GM10248 (cell line): ENCODE measurements at regions of chr9 and their contacts with region 1.

Region 1: GRCh38 chr9:34332076-34332964 is 3.0 kb downstream of the NUDT2 start:
- DNase-seq: no peak
- CTCF ChIP-seq: peak; percentile 47

Region 2: DNA sequence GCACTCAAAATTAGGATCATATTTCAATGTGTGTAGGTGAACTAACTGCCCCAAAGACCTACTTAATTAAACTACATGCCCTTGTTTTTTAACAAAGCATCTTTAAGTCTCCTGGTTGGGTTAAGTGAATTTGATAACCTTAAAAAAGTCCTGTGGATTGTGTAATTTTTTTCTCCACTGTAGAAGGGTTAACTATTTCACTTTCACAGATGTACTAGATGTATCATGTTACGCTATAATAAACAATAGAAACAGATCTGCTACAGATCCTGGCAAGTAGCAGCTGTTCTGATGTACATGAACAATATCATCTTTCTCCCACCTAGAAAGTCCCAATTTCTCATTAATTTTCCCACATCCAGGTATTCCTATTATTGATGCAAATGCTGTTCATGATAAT is 22.1 kb before region 1 on chr9:
- CTCF ChIA-PET with region 1: no interaction called
- POLR2A ChIA-PET with region 1: no interaction called
- DNase-seq: no peak
- CTCF ChIP-seq: no peak

Region 3: GRCh38 chr9:34346873-34347799 is 14.8 kb after region 1 on chr9:
- CTCF ChIA-PET with region 1: interaction called, 11 read pairs
- POLR2A ChIA-PET with region 1: interaction called, 4 read pairs
- DNase-seq: no peak
- CTCF ChIP-seq: no peak

Region 4: DNA sequence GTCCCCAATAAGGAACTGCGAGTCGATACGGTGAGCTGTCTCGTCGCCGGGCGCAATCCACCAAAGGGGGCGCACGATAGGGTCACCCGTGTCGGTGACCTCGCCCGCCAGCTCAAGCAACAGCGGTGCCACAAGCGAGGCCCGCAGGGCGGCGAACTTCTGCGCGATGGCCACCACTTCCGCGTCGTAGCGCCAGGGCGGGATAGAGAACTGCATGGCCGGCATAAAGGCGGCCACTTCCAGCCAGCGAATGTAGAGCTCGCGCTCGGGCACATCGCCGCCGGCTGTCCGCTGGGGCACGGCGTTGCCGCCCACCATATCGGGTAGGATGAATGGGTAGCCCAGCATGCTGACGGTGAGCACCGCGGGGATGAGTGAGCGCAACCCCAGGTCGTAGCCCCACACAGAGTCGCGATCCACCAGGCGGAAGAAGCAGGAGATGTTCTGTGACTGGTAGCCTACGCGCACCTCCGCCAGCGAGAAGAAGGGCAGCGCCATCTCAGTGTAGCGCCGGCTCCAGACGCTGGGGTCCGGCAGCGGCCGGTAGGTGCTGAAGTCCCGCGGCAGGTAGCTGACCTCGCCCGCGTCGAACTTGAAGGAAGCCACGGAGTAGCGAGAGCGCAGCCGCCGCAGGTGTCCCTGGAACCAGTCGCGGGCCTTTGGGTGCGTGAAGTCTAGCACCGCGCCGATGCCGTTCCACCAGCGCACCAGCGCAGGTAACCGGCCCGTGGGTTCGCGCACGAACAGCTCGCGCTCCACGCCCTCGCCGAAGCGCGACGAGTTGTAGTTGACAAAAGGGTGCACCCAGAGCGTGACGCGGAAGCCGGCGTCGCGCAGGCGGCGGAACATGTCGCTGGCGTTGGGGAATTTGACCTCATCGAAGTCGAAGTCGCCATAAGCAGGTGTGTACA is 38.9 kb after region 1 on chr9:
- CTCF ChIA-PET with region 1: interaction called, 162 read pairs
- POLR2A ChIA-PET with region 1: interaction called, 9 read pairs
- DNase-seq: no peak
- CTCF ChIP-seq: no peak

Region 5: DNA sequence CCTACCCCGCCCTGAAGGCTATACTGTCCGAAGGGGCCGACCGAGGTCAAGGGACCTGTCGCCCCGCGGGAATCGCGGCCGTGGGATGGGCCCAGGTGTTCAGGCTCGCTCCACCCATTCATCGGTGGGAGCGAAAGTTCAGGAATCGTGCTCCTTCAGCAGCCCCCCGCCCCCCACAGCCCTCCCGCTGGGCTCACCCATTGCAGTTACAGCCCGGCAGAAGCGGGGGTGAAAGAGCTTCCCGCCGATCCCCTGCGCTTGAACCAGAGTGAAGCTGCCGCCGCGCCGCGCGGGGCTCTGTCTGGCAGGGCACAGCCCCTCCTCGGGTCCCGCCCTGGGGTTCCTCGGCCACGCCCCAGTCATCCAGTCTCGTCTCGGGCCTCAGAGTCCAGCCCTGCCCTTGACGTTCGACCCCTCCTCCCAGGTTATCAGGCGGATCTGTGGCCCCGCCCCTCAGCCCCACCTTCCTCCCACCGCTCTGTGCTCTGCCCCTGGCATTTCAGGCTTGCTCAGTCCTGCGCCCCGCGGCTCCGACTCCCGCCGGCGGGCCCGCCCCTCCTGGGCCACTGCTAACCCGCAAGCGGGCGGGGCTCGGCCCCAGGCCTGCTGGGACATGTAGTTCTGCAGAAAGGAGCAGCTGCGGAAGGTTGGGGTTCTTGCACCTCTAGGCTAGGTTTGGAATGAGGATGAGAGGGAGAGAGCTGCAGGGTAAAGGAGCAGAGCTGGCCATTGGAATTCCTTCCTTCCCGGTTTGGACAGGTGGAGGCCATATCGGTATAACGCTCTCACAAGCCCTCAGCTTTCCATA is 44.5 kb after region 1 on chr9 and contains the start of gene MYORG:
- CTCF ChIA-PET with region 1: interaction called, 162 read pairs
- POLR2A ChIA-PET with region 1: interaction called, 9 read pairs
- DNase-seq: peak; percentile 99
- CTCF ChIP-seq: no peak